Activated T-helper 2 cell treated with anti-CD3 and anti-CD28 coated beads, Interferon-gamma antibody, Interleukin-2, Interleukin-4, amounts not matched to agents 10 μg/mL and 5 μg/mL and 100 μg/mL, durations not matched to agents 14 hours and 24 hours and 36 hours (primary cell): ENCODE measurements at regions of chr1 and their contacts with region 1.

Region 1: GRCh38 chr1:11719313-11720032 is 16.5 kb upstream of the AGTRAP start:
- DNase-seq: peak; percentile 69
- H3K4me3 Mint-ChIP-seq: peak overlapping the region; percentile 76
- H3K27ac Mint-ChIP-seq: peak overlapping the region; percentile 82
- H3K4me1 Mint-ChIP-seq: peaks cover 10% of the 10 kb centered on the region
- H3K27me3 Mint-ChIP-seq: peaks cover 2% of the 10 kb centered on the region

Region 2: GRCh38 chr1:11650331-11650991 is 69.0 kb before region 1 on chr1:
- intact Hi-C with region 1: loop called (anchors 2 kb)
- DNase-seq: peak; percentile 68
- H3K4me3 Mint-ChIP-seq: peak overlapping the region; percentile 54
- H3K27ac Mint-ChIP-seq: no peak overlapping the region
- H3K4me1 Mint-ChIP-seq: peaks cover 12% of the 10 kb centered on the region
- H3K27me3 Mint-ChIP-seq: peaks cover 17% of the 10 kb centered on the region